ENCODE measurements at regions of chr5 and their contacts with region 1.

Region 1: DNA sequence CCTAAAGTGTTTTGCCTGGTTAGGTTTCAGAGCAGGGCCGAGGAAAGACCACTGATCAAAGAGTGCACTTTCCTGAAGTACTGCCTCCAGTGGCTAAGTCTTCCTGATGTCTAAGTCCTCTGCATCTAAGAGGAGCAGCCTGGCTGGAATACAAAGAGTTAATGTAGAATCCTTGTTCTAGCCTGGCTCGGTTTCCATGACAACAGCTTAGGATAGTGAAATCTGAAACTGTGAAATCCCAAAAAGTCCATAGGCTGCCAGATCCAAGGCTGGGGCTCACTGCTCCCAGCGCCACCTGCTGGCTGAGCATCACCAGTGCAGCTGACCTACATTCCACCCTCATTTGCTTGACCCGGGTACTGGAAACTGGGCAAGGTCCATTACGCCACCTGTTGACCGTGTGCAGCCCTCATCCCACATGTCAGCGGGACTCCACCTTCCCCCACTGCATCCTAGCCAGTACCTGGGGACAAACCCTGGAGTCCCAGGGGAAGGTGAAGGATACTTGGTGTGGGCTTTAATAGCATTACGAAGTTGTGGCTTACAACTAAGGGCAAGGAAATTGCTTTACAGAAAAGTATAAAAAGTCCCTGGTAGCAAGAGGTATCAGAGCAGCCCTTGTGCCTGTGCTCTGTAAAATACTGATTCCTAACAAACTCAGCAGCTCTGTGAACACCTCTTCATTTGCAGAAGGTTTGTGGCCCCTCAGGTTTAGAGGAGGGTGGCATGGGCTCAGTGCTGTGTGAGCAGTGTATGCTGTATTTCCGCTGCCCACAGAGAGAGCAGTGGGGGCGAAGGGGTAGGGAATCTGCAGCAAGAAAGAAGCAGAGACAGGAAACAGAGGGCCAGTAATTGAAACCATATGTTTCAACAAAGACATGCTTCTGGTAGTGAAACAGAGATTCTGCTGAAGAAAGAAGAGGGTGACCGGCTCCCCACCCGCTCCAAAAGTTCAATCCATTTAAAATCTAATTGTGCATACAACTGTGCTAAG is 36.0 kb downstream of the PCDHGC5 start:
- DNase-seq: peak; percentile 82 to 86
- ATAC-seq: peak; percentile 85

Region 2: DNA sequence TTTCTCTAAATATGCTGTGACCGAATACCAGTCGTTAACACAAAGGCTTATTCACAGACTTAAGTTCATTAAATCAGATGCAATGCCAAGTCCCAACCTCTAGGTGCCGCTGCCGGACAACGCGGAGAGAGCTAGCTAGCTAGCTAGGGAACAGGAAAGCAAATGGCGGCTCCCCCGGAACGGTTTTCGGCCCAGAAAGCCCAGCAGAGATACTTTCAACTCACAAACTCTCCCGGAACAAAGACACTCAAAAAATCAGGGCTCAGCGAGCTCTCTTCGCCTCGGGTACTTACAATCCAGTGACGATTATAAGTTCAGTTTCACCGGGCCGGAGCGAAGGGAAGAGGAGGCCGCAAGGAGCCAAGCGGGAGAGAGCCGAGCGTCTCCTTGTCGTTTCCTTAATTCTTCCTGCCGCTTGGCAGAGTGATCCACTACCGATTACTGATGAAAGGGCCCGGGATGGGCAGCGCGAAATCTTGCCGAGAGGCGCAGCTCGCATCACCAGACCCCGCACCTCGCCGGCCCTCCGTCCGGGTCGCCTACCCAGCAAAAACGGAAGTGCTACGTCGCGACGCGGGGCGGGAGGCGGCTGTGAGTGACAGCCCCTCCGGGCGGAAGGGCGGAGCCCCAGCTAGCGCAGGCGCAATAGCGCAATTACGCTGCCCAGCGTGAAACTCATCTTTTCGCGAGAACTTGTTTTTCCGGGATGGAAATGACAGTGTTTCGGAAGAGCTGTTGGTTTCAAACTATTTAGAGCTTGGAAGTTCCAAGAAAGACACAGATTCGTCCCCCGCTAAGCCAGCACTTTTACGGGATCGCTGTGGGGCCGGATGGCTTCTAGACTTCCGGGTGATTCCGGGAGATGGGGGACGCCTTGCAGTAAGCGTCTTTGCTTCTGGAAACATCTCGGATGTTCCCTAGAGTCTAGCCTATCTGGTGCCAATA is 204.4 kb before region 1 on chr5 and contains the start of gene TAF7:
- intact Hi-C with region 1: loop called in 1 of 2 experiments (anchors 10 kb)
- DNase-seq: peak; percentile 91 to 93
- ATAC-seq: peak; percentile 99
- total RNA-seq, gene TAF7: 52.3 to 66.1 TPM

Region 3: DNA sequence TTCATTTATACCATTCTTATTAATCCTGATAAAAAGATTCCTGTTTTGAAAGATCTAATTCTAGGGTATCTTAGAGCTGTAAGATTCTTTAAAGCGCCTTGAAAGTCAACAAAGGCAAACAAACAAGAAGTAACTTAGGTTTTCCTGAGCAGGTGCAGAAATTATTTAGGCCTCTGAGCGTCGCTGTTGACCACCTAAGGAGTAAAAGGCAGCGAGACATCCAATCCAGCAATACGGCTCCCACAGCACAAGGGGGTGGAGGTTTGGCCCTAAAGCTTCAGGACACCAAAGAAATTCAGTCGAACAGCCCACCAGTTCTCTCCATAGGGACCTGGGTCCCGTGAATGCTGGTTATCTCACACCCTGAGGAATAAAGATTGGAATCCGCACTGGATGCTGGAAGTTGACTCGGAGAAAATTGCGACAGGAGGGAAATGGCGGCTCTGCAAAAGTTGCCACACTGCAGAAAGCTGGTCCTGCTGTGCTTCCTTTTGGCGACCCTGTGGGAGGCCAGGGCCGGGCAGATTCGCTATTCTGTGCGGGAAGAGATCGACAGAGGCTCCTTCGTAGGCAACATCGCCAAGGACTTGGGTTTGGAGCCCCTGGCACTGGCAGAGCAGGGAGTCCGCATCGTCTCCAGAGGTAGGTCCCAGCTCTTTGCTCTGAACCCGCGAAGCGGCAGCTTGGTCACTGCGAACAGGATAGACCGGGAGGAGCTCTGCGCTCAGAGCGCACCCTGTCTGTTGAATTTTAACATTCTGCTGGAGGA is 186.2 kb before region 1 on chr5 and contains the start of gene PCDHGA2:
- intact Hi-C with region 1: no loop called
- DNase-seq: no peak
- ATAC-seq: no peak
- total RNA-seq, gene PCDHGA2: 0.31 to 0.75 TPM